HepG2 (cell line): ENCODE measurements at regions of chr10 and their contacts with region 1.

Region 1: GRCh38 chr10:88932539-88933256 is 19.9 kb downstream of the ACTA2 start:
- DNase-seq: peak; percentile 60
- ATAC-seq: peak; percentile 92
- H3K4me3 ChIP-seq: no peak overlapping the region
- H3K27ac ChIP-seq: no peak overlapping the region
- H3K4me1 ChIP-seq: peaks cover 8% of the 10 kb centered on the region
- H3K27me3 ChIP-seq: no peaks in the 10 kb centered on the region
- CTCF ChIP-seq: peak; percentile 86
- EP300 ChIP-seq: no peak
- POLR2A ChIP-seq: no peak
- RAD21 ChIP-seq: peak; percentile 57

Region 2: GRCh38 chr10:88880282-88881076 is 52.2 kb before region 1 on chr10:
- CTCF ChIA-PET with region 1: no interaction called
- POLR2A ChIA-PET with region 1: no interaction called
- in situ Hi-C with region 1: no loop called
- intact Hi-C with region 1: loop called (anchors 2 kb)
- DNase-seq: peak; percentile 36
- ATAC-seq: peak; percentile 94
- H3K4me3 ChIP-seq: peak overlapping the region; percentile 65 to 85 (median 67)
- H3K27ac ChIP-seq: peak overlapping the region; percentile 14
- H3K4me1 ChIP-seq: peaks cover 20% of the 10 kb centered on the region
- H3K27me3 ChIP-seq: peaks cover 0 to 15% of the 10 kb centered on the region in 2 experiments; a peak in 1 of 5 replicates
- CTCF ChIP-seq: peak; percentile 57
- EP300 ChIP-seq: no peak
- POLR2A ChIP-seq: 0 out of 4 replicates have a peak, but pooled peaks have one; percentile 7 to 19
- RAD21 ChIP-seq: no peak

Region 3: GRCh38 chr10:88986549-88987242 is 54.0 kb after region 1 on chr10:
- CTCF ChIA-PET with region 1: interaction called, 25 read pairs
- POLR2A ChIA-PET with region 1: no interaction called
- in situ Hi-C with region 1: no loop called
- intact Hi-C with region 1: loop called (anchors 1 kb)
- DNase-seq: peak; percentile 19
- ATAC-seq: no peak
- H3K4me3 ChIP-seq: no peak overlapping the region
- H3K27ac ChIP-seq: no peak overlapping the region
- H3K4me1 ChIP-seq: peaks cover 30% of the 10 kb centered on the region
- H3K27me3 ChIP-seq: no peaks in the 10 kb centered on the region; a peak in 1 of 5 replicates
- CTCF ChIP-seq: peak; percentile 43
- EP300 ChIP-seq: no peak
- POLR2A ChIP-seq: no peak
- RAD21 ChIP-seq: no peak

Region 4: GRCh38 chr10:89207181-89207800 is 274.6 kb after region 1 on chr10 and contains the start of gene CH25H:
- CTCF ChIA-PET with region 1: interaction called, 10 read pairs
- POLR2A ChIA-PET with region 1: no interaction called
- in situ Hi-C with region 1: loop called (anchors 10 kb)
- intact Hi-C with region 1: no loop called
- DNase-seq: no peak
- ATAC-seq: peak; percentile 76
- H3K4me3 ChIP-seq: peak within 1 kb of the TSS; percentile 39 to 62 (median 42)
- H3K27ac ChIP-seq: no peak within 1 kb of the TSS
- H3K4me1 ChIP-seq: peaks cover 22% of the 10 kb centered on the region
- H3K27me3 ChIP-seq: peaks cover 17 to 56% of the 10 kb centered on the region in 2 experiments
- CTCF ChIP-seq: no peak
- EP300 ChIP-seq: no peak
- POLR2A ChIP-seq: no peak
- RAD21 ChIP-seq: no peak
- total RNA-seq, gene CH25H: not detected in 2 replicates